Activated CD4-positive, alpha-beta memory T cell treated with anti-CD3 and anti-CD28 coated beads, Interleukin-2, amount 10 ng/mL, durations not matched to agents 7 days and 5 days (primary cell): ENCODE measurements at regions of chr6 and their contacts with region 1.

Region 1: GRCh38 chr6:32843979-32844838 is at the start of gene PSMB8:
- DNase-seq: peak; percentile 99
- H3K4me3 Mint-ChIP-seq: peak within 1 kb of the TSS; percentile 97
- H3K27ac Mint-ChIP-seq: peak within 1 kb of the TSS; percentile 99
- H3K4me1 Mint-ChIP-seq: peaks cover 69% of the 10 kb centered on the region
- H3K27me3 Mint-ChIP-seq: no peaks in the 10 kb centered on the region
- total RNA-seq, gene PSMB8: 389 to 401 TPM

Region 2: GRCh38 chr6:32825966-32826365 is 18.2 kb before region 1 on chr6:
- CTCF ChIA-PET with region 1: interaction called, 29 read pairs
- POLR2A ChIA-PET with region 1: interaction called, 31 read pairs
- DNase-seq: no peak
- H3K4me3 Mint-ChIP-seq: no peak overlapping the region
- H3K27ac Mint-ChIP-seq: no peak overlapping the region
- H3K4me1 Mint-ChIP-seq: peaks cover 25% of the 10 kb centered on the region
- H3K27me3 Mint-ChIP-seq: no peaks in the 10 kb centered on the region

Region 3: GRCh38 chr6:32862725-32863124 is 18.5 kb after region 1 on chr6:
- CTCF ChIA-PET with region 1: interaction called, 337 read pairs
- POLR2A ChIA-PET with region 1: interaction called, 1,055 read pairs
- DNase-seq: no peak
- H3K4me3 Mint-ChIP-seq: no peak overlapping the region
- H3K27ac Mint-ChIP-seq: no peak overlapping the region
- H3K4me1 Mint-ChIP-seq: peaks cover 54% of the 10 kb centered on the region
- H3K27me3 Mint-ChIP-seq: no peaks in the 10 kb centered on the region

Region 4: DNA sequence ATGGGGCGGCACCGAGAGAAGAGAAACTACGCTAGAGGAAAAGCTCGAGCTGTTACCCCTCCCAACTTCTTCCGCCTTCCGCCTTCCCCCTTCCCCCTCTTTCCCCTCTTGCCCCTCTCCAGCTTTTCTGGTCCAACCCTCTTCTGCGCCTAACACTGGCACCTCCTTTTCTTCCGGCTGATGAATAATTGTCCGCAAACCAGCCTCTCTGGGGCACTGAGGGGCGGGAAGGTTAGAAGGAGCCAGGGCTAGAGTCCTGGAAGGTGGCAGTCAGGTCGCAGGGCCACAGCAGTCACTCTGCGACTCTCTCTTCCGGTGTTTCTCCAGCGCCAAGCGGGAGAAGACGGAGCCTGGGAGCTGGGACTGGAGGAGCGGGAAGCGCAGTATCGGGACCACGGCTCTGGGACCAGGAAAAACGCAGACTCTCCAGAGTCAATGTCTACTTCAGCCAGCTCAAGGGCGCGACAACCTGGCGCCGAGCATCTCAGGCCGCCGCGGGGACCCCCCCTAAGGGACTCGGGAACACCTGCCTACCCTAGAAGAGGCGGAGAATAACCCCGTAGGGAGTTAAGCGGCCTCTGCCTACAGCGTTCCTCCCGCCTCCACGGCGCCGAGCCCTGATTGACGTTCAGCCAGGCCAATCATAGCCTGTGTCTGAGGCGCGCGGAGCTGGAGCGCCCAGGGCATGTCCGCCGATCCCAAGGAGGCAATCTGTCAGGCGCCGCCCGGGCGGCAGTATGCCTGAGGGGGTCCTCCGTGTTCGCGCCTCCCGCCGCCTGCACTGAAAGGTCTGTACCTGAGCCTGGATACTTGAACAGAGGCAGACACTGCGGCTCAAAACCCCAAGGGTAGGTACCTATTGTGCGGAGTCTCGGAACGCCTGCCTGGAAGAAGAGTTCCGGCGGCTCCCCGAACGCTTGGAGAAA is 50.1 kb after region 1 on chr6:
- CTCF ChIA-PET with region 1: interaction called, 10 read pairs
- POLR2A ChIA-PET with region 1: interaction called, 12 read pairs
- DNase-seq: peak; percentile 95
- H3K4me3 Mint-ChIP-seq: peak overlapping the region; percentile 99
- H3K27ac Mint-ChIP-seq: peak overlapping the region; percentile 91
- H3K4me1 Mint-ChIP-seq: peaks cover 40% of the 10 kb centered on the region
- H3K27me3 Mint-ChIP-seq: peaks cover 8% of the 10 kb centered on the region

Region 5: GRCh38 chr6:32920715-32921114 is 76.5 kb after region 1 on chr6:
- CTCF ChIA-PET with region 1: no interaction called
- POLR2A ChIA-PET with region 1: no interaction called
- DNase-seq: no peak
- H3K4me3 Mint-ChIP-seq: no peak overlapping the region
- H3K27ac Mint-ChIP-seq: no peak overlapping the region
- H3K4me1 Mint-ChIP-seq: peaks cover 8% of the 10 kb centered on the region
- H3K27me3 Mint-ChIP-seq: peaks cover 23% of the 10 kb centered on the region

Region 6: GRCh38 chr6:32940656-32941213 is 96.5 kb after region 1 on chr6 and contains the start of gene HLA-DMB:
- CTCF ChIA-PET with region 1: interaction called, 3 read pairs
- POLR2A ChIA-PET with region 1: interaction called, 16 read pairs
- DNase-seq: peak; percentile 60
- H3K4me3 Mint-ChIP-seq: peak within 1 kb of the TSS; percentile 82
- H3K27ac Mint-ChIP-seq: peak within 1 kb of the TSS; percentile 94
- H3K4me1 Mint-ChIP-seq: peaks cover 59% of the 10 kb centered on the region
- H3K27me3 Mint-ChIP-seq: no peaks in the 10 kb centered on the region
- total RNA-seq, gene HLA-DMB: 19.1 to 20.0 TPM

Region 7: DNA sequence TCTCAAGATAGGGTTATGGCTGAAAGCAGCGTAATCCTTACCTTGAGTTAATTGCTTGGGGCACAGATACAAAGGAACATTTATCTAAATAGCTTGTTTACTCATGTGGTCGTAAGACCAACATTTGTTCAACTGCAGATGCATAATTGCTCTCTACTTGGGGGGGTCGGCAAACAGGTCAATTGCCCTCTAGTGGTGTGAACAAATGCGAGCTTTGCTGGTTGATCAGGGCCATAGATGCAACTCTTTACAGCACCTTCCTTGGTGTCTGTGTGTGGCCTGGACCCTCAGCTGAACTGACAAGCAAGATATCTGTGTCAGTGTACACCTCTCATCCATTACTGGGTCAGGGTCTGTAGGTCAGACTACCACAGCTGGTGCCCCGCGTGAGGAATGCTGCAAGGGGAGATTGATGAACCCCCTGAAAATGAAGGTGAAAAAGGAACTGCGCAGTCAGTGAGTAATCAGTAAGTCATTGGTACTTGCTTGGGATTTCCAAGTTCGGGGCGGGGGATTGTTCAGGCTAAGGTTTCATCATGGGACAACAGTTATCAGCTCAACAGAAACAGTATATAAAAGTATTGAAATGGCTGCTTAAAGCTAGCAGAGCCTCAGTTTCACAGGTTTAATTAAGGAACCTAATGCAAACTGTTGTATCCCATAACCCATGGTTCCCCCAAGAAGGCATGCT is 205.3 kb after region 1 on chr6:
- CTCF ChIA-PET with region 1: no interaction called
- POLR2A ChIA-PET with region 1: no interaction called
- DNase-seq: no peak
- H3K4me3 Mint-ChIP-seq: no peak overlapping the region
- H3K27ac Mint-ChIP-seq: no peak overlapping the region
- H3K4me1 Mint-ChIP-seq: no peaks in the 10 kb centered on the region
- H3K27me3 Mint-ChIP-seq: peaks cover 55% of the 10 kb centered on the region